ENCODE measurements at regions of chr18 and their contacts with region 1.

Region 1: GRCh38 chr18:56522816-56523215 is 115.6 kb downstream of the TXNL1 start:
- DNase-seq: no peak
- H3K4me3 ChIP-seq: no peak overlapping the region
- H3K27ac ChIP-seq: no peak overlapping the region
- H3K4me1 ChIP-seq: no peaks in the 10 kb centered on the region
- H3K27me3 ChIP-seq: no peaks in the 10 kb centered on the region
- CTCF ChIP-seq: no peak
- EP300 ChIP-seq: no peak
- POLR2A ChIP-seq: no peak

Region 2: GRCh38 chr18:57301573-57302559 is 779.0 kb after region 1 on chr18:
- in situ Hi-C with region 1: no loop called
- intact Hi-C with region 1: loop called (anchors 10 kb)
- DNase-seq: no peak
- H3K4me3 ChIP-seq: no peak overlapping the region
- H3K27ac ChIP-seq: no peak overlapping the region
- H3K4me1 ChIP-seq: no peaks in the 10 kb centered on the region
- H3K27me3 ChIP-seq: no peaks in the 10 kb centered on the region
- CTCF ChIP-seq: no peak
- EP300 ChIP-seq: no peak
- POLR2A ChIP-seq: no peak

Measured in transverse colon (tissue), 4 donors.